ENCODE measurements at regions of chr12 and their contacts with region 1.

Region 1: DNA sequence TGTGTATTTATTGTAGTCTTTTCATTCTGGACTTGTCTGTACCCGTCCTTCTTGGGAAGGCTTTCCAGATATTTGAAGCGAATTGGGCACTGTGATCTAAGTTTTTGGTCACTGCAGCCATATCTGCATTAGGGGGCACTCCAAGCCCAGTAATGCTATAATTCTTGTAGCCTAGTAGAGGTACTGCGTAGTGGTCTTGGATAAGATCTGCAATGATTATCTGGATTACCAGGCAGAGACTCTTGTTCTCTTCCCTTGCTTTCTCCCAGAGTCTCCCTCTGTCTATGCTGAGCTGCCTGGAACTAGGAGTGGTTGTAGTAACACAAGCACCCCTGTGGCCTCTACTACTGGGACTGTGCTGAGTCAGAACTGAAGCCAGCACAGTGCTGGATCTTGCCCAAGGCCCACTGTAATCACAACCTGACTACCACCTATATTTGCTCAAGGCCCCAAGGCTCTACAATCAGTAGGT is 30.0 kb downstream of the SLC38A2 start:
- DNase-seq: no peak
- ATAC-seq: peak; percentile 71 to 84

Region 2: GRCh38 chr12:46282829-46283228 is 59.8 kb before region 1 on chr12:
- intact Hi-C with region 1: no loop called
- DNase-seq: no peak
- ATAC-seq: no peak

Region 3: GRCh38 chr12:47021298-47021697 is 678.7 kb after region 1 on chr12:
- intact Hi-C with region 1: loop called in 1 of 2 experiments (anchors 2 kb)
- DNase-seq: no peak
- ATAC-seq: peak in 1 of 2 donors; percentile 37